ENCODE measurements at regions of chr2 and their contacts with region 1.

Region 1: DNA sequence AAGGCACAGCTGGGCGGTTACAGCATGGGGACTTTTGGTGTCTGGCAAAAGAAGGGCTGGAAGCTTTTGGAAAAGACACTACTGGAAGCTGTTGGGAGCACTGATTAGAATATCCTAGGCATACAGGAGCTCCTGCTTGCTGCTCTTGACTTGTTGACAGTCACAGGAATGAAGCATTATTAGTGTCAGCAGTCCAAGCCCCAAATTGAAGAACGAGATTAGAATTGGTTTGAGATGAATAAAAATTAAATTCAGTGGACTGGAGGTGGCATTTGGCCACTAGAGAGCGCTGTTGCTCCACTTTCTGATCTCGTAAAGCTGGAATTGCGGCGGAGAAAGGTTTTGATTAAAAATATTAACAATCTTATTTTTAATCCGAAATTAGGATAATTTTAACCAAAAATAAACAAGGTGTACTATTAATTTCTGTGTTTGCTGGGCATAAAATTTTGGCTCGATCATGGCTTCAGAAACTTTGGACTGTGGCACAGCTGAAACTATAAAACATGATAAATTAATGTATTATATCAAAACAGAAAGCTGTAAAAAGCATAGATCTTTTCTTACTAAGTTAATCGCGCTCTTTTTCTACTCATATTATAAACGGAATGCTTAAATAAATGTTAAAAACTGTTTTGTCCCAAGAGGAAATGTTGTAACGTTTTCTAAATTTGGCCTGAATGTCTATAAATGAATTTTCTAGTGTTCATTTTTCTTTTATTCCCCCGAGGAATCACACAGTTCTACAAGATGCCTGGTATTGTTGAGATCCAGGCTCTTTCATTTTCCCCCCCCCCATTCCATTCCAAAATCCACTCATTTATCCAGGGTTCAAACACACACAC is 2.4 kb upstream of the HOXD8 start:
- DNase-seq: peak; percentile 24
- H3K4me3 Mint-ChIP-seq: no peak overlapping the region
- H3K27ac Mint-ChIP-seq: peak overlapping the region; percentile 23
- H3K4me1 Mint-ChIP-seq: peaks cover 31% of the 10 kb centered on the region
- H3K27me3 Mint-ChIP-seq: peaks cover 76% of the 10 kb centered on the region

Region 2: DNA sequence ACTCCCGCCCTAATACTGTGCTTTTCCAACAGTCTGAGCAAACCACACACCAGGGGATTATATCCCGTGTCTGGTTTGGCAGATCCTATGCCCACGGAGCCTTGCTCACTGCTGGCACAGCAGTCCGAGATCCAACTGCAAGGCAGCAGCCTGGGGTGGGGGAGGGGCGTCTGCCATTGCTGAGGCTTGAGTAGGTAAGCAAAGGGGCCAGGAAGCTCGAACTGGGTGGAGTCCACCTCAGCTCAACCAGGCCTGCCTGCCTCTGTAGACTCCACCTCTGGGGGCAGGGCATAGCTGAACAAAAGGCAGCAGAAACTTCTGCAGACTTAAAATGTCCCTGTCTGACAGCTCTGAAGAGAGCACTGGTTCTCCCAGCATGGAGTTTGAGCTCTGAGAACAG is 169.3 kb before region 1 on chr2:
- intact Hi-C with region 1: no loop called
- DNase-seq: no peak
- H3K4me3 Mint-ChIP-seq: no peak overlapping the region
- H3K27ac Mint-ChIP-seq: no peak overlapping the region
- H3K4me1 Mint-ChIP-seq: no peaks in the 10 kb centered on the region
- H3K27me3 Mint-ChIP-seq: no peaks in the 10 kb centered on the region

Region 3: DNA sequence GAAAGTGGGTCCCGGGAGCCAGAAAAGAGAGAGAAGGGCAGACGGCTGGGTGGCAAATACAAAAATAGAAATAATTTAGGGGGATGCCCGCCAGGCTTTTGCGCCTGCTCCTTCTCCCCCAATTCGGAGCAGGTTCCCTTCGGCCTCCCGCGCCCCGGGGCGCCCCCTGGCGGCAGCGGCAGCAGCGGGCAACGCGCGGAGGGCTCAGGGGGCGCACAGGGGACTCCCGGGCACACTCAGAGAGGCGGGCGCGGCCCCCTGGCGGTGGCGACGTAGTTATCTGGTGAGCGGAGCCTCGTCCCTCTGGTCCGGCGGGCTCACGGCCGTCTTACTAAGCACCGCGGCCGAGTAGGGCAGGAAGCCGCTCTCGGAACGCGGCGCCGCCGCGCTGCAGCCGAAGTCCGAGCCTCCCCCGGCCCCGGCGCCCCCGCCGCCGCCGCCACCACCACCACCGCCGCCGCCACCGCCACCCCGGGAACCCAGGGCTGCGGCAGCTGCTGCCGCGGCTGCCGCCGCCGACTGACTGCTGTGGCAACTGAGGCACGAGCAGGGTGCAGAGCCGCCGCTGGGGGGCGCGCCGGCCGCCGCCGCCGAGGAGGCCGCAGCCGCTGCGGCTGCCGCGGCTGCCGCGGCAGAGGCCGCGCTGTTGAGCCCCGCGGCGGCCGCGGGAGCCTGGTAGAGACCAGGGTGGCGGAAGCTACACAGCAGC is 47.2 kb before region 1 on chr2:
- intact Hi-C with region 1: loop called (anchors 2 kb)
- DNase-seq: no peak
- H3K4me3 Mint-ChIP-seq: peak overlapping the region; percentile 15
- H3K27ac Mint-ChIP-seq: peak overlapping the region; percentile 89
- H3K4me1 Mint-ChIP-seq: no peaks in the 10 kb centered on the region
- H3K27me3 Mint-ChIP-seq: peaks cover 72% of the 10 kb centered on the region

Region 4: DNA sequence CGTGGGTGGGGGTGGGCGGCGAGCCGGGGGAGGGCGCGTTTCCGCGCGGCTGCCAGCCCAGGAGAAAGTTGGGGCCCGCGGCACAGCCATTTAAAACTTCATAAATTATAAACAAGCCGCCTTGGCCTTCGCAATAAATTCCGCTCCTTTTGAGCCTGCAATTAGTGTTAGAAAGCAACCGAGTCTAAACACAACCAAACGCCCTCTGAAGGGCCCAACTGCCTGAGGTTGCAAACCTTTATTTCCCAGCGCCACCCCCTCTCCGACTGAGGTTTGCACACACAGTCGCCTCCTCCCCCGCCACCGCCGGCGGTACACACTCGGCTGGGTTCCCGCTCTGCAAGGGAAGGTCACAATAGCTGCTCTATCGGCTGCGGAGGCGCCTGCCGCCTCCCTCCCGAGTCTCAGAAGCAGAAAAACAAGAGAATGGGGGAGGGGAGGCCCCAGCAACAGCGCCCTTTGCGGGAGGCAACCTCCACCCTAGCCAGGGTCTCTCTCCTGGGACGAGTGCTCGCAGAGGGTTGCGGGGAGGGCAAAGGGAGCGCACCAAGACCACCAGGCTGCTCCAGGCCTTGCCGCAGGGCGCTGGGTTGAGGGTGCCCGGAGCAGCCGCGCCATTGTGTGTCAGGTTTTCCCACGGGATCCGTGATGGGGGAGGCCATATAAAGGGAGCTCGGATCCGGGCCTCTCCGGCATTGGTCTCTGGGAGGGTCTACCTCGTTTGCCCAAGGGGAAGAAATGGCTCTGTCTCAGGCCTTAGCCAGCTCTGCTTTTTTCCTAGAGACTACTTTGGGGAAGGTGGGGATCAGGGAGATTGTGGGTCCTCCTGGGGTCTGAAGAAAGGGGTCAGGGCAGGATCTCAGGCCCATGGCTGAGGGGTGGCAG is 47.9 kb after region 1 on chr2:
- intact Hi-C with region 1: loop called (anchors 5 kb)
- DNase-seq: no peak
- H3K4me3 Mint-ChIP-seq: no peak overlapping the region
- H3K27ac Mint-ChIP-seq: no peak overlapping the region
- H3K4me1 Mint-ChIP-seq: peaks cover 6% of the 10 kb centered on the region
- H3K27me3 Mint-ChIP-seq: peaks cover 84% of the 10 kb centered on the region

Region 5: DNA sequence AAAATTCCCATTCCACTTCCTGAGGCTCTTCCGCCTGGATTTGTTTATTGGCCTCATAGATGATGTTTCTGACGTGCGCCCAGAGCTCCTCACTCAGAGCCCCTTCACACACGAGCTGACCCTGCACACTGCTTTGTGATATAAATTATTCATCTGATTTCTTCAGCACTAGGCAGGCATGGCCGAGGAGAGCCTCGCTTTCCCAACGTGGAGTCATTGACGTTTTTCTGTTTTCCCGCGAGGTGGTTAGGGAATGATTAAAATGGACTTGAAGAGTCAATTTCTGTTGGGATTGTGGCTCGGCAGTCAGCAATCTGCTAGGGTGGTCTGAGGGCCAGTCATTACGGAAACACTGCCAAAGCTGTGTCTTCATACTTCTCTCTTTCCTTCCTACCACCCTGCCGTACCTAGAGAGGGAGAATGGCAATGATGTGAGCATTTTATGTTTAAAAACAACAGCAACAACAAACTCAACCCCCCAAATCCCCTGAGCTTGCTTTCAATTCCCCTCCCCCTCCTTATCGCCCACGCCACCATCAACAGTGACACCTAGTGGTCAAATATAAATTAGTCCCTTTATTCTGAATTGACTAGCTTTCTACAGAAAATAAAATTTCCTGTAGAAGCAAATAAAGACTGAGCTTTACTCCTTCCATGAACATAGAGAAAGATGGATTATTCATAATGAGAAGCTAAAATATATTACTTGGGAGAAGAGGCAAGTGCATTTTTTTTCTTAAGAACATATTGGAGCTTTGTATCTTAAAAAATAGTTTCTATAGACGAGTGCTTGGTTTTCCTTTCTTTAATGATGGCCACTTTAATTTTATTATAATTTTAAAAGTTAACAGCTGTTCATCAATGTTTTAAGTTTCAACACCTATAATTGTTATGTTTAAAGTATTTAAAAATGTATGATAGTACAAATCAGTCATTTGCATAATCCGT is 427.2 kb after region 1 on chr2:
- intact Hi-C with region 1: loop called (anchors 5 kb)
- DNase-seq: no peak
- H3K4me3 Mint-ChIP-seq: peak overlapping the region; percentile 72
- H3K27ac Mint-ChIP-seq: no peak overlapping the region
- H3K4me1 Mint-ChIP-seq: peaks cover 14% of the 10 kb centered on the region
- H3K27me3 Mint-ChIP-seq: peaks cover 30% of the 10 kb centered on the region

Region 6: GRCh38 chr2:176814306-176815052 is 687.3 kb after region 1 on chr2:
- intact Hi-C with region 1: loop called (anchors 2 kb)
- DNase-seq: no peak
- H3K4me3 Mint-ChIP-seq: no peak overlapping the region
- H3K27ac Mint-ChIP-seq: no peak overlapping the region
- H3K4me1 Mint-ChIP-seq: peaks cover 5% of the 10 kb centered on the region
- H3K27me3 Mint-ChIP-seq: peaks cover 2% of the 10 kb centered on the region

Measured in activated T-helper 1 cell treated with anti-CD3 and anti-CD28 coated beads, Interleukin-12 subunit alpha, Interleukin-12 subunit beta, Interleukin-2, Interleukin-4 antibody, amounts not matched to agents 30 ng/mL and 10 ng/mL and 1 ng/mL, durations not matched to agents 14 hours and 24 hours and 36 hours (primary cell).